ENCODE measurements at regions of chr3 and their contacts with region 1.

Region 1: DNA sequence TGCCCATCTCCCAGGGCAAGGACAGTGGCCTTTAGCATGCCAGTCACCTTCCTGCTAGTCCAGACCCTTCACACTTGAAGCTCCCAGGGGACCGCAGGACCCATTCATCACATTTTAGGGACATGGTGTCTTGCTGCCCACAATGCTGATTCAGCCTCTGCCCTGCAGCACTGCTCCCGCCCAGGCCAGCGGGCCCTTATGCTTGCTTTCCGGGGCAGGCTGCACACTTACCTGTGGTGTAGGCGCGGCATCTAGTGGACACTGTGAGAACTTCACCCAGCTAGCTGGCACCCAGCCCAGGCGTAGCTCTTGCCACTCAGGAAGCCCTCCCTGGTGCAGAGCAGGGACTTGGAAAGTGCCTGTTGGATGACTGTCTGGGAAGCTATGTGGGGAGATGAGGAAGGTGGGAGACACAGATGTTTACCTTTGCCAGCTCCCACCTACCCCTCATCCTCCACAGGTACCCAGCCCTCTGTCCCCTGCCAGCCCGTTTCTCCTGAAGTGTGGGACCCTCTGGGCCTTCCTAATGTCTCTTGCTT is 26.2 kb upstream of the NR2C2 start:
- DNase-seq: peak; percentile 85 to 91 (median 88)
- H3K4me3 ChIP-seq: no peak overlapping the region
- H3K27ac ChIP-seq: no peak overlapping the region
- H3K4me1 ChIP-seq: peaks cover 0 to 7% (median 2%) of the 10 kb centered on the region in 4 experiments
- H3K27me3 ChIP-seq: no peaks in the 10 kb centered on the region

Region 2: DNA sequence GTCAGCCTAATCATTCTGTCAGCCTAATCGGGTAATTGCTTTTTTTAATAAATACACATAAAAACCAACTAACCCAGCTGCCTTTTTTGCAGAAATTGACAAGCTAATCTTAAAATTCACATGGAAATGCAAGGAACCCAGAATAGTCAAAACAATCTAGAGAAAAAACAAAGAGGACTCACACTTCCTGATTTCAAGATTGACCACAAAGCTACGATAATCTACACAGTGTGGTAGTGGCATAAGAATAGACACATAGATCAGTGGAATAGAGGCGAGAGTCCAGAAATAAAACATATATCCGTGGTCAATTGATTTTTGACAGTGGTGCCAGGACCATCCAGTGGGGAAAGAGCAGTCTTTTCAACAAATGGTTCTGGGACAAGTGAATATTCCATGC is 248.6 kb before region 1 on chr3:
- CTCF ChIA-PET with region 1: interaction called, 51 read pairs
- POLR2A ChIA-PET with region 1: no interaction called
- DNase-seq: peak in 2 of 3 donors; percentile 17 to 36
- H3K4me3 ChIP-seq: no peak overlapping the region
- H3K27ac ChIP-seq: no peak overlapping the region
- H3K4me1 ChIP-seq: peaks cover 0 to 9% (median 3%) of the 10 kb centered on the region in 4 experiments
- H3K27me3 ChIP-seq: no peaks in the 10 kb centered on the region

Region 3: DNA sequence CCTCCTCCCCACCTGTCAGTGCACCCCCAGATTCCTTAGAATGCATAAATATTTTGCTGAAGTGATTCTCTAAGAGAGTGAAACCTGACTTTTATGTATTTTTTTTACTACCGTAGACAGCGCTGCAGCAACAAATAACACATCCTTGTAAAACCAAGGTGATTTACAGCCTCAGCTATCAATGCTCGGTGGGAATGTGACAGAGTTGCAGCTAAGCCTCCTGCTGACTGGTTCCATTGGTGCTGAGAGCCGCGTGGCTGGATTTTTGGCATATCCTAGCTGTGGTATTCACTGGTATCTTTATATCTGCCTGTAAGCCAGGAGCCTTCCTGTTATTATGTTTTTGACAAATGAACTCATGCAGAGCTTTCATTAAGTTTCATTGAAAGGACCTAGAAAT is 91.3 kb before region 1 on chr3:
- CTCF ChIA-PET with region 1: no interaction called
- POLR2A ChIA-PET with region 1: no interaction called
- DNase-seq: no peak
- H3K4me3 ChIP-seq: no peak overlapping the region
- H3K27ac ChIP-seq: no peak overlapping the region
- H3K4me1 ChIP-seq: peaks cover 0 to 7% (median 0%) of the 10 kb centered on the region in 4 experiments
- H3K27me3 ChIP-seq: no peaks in the 10 kb centered on the region

Region 4: GRCh38 chr3:14907043-14907966 is 13.8 kb before region 1 on chr3:
- CTCF ChIA-PET with region 1: interaction called, 11 read pairs
- POLR2A ChIA-PET with region 1: no interaction called
- DNase-seq: no peak
- H3K4me3 ChIP-seq: no peak overlapping the region
- H3K27ac ChIP-seq: no peak overlapping the region
- H3K4me1 ChIP-seq: peaks cover 0 to 3% (median 0%) of the 10 kb centered on the region in 4 experiments
- H3K27me3 ChIP-seq: no peaks in the 10 kb centered on the region

Region 5: DNA sequence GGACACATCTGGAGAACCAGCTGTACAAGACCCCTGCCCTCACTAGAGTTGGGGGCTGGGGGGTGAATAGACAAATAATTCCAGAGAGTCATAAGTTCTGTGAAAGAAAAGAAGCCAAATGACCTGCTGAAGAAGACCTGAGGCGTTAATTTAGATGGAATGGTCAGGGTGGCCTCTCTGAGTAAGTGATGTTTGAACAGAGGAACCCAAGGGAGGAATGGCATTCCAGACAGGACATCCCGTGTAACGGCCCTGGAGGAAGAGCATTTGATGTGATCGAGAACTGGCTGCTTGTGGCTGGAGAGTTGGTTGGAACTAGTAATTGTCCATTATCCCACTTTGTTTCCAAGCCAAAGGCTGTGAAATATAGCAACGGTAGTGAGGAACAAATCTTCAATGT is 28.0 kb after region 1 on chr3:
- CTCF ChIA-PET with region 1: interaction called, 10 read pairs
- POLR2A ChIA-PET with region 1: no interaction called
- DNase-seq: no peak
- H3K4me3 ChIP-seq: peak overlapping the region in 6 of 7 experiments; percentile 67 to 90 (median 84)
- H3K27ac ChIP-seq: peak overlapping the region; percentile 67 to 89
- H3K4me1 ChIP-seq: peaks cover 27 to 46% (median 33%) of the 10 kb centered on the region in 4 experiments
- H3K27me3 ChIP-seq: no peaks in the 10 kb centered on the region

Region 6: DNA sequence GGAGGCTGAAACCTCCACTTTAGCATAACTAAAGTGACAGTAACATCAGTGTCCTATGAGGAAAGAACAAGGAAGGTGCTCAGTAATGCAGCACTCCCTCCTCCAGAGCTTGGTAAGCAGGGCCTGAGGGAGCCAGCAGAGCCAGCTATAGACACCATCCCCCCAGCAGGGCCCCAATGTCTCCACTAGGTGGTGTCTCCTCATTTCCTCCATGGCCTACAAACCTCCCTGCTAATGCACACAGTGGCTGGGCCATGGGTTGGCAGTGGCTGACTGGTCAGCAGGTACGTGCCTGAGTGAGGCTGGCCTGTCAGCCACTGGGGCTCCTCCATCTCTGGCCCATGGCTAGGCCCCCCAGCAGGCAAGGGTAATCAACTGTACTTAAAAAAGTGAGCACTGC is 130.4 kb after region 1 on chr3:
- CTCF ChIA-PET with region 1: interaction called, 11 read pairs
- POLR2A ChIA-PET with region 1: no interaction called
- DNase-seq: peak; percentile 25 to 56 (median 46)
- H3K4me3 ChIP-seq: no peak overlapping the region
- H3K27ac ChIP-seq: no peak overlapping the region
- H3K4me1 ChIP-seq: peaks cover 0 to 3% (median 1%) of the 10 kb centered on the region in 4 experiments
- H3K27me3 ChIP-seq: no peaks in the 10 kb centered on the region